Transverse colon (tissue), 4 donors: ENCODE measurements at regions of chr15 and their contacts with region 1.

Region 1: DNA sequence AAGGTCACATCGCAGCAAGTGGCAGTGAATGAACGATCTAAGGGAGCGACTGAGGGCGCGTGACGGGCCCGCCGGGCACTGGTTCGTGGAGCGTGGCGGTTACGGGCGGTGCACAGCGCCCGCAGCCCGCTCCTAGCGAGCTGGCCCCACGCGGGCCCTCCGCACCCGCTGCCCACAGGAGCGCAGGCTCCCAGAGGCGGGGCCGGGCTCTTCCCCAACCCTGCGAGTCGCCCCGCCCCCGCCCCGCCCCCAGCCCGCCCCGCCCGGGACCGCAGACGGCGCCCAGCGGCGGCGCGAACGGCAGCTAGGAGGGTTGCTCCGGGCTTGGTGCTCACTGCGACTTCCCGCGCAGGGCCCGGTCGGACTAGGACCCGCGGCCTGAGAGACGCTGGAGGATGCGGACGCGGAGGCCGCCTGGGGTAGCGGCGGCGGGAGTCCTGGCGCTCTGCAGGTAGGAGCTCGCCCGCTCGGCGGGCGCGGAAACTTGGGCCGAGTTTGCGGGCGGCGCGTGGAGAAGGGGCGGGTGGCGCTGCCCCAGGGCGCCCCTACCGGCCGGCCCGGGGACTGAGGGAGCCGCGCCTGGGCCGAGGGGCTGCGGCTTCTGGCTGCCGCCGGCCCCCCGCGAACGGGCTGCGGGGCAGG is at the start of gene C15orf39:
- DNase-seq: peak; percentile 78
- H3K4me3 ChIP-seq: peak within 1 kb of the TSS; percentile 79 to 89 (median 86)
- H3K27ac ChIP-seq: peak within 1 kb of the TSS; percentile 96 to 97 (median 96)
- H3K4me1 ChIP-seq: peaks cover 30 to 51% (median 37%) of the 10 kb centered on the region in 4 donors
- H3K27me3 ChIP-seq: no peaks in the 10 kb centered on the region
- CTCF ChIP-seq: peak; percentile 60 to 98 (median 94)
- EP300 ChIP-seq: no peak
- POLR2A ChIP-seq: peak; percentile 94
- total RNA-seq, gene C15orf39: 20.9 to 27.9 (median 26.7) TPM

Region 2: GRCh38 chr15:74573987-74574386 is 627.7 kb before region 1 on chr15:
- in situ Hi-C with region 1: no loop called
- intact Hi-C with region 1: no loop called
- DNase-seq: no peak
- H3K4me3 ChIP-seq: no peak overlapping the region
- H3K27ac ChIP-seq: no peak overlapping the region
- H3K4me1 ChIP-seq: peaks cover 0 to 4% (median 0%) of the 10 kb centered on the region in 4 donors
- H3K27me3 ChIP-seq: no peaks in the 10 kb centered on the region
- CTCF ChIP-seq: no peak
- EP300 ChIP-seq: no peak
- POLR2A ChIP-seq: no peak

Region 3: DNA sequence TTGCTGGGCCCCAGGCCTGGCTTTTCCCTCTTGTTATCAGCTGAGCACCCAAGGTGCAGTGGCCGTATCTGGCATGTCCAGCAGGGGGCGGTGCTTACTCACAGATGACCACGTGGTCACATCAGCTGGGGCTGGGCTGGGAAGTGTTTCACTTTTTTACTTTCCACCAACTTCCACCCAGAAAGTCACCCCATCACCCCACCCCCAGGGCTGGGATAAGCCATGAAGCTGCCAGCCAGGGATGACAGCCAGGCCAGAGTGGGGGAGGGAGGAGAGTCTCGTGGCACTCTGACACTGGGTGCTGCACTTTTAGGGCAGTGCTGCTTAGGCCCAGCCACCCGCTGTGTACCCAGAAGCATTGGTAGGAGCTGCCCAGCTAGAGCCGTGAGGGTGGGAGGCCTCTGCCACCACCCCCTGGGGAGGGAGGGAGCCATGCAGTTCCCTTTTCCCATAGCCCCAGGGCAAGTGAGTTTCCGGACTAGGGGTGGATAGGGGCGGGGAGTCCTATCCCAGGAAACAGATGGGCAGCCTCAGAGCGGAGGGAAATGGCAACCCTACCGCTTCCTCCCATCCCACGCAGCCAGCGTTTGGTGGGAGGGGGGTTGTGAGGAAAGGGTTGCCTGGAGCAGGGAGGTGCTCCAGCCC is 172.2 kb before region 1 on chr15:
- in situ Hi-C with region 1: loop called (anchors 5 to 10 kb)
- intact Hi-C with region 1: loop called (anchors 2 kb)
- DNase-seq: peak; percentile 95
- H3K4me3 ChIP-seq: no peak overlapping the region
- H3K27ac ChIP-seq: peak overlapping the region; percentile 36 to 71 (median 63)
- H3K4me1 ChIP-seq: peaks cover 19 to 40% (median 22%) of the 10 kb centered on the region in 4 donors
- H3K27me3 ChIP-seq: no peaks in the 10 kb centered on the region
- CTCF ChIP-seq: peak; percentile 91 to 98 (median 93)
- EP300 ChIP-seq: no peak
- POLR2A ChIP-seq: no peak

Region 4: DNA sequence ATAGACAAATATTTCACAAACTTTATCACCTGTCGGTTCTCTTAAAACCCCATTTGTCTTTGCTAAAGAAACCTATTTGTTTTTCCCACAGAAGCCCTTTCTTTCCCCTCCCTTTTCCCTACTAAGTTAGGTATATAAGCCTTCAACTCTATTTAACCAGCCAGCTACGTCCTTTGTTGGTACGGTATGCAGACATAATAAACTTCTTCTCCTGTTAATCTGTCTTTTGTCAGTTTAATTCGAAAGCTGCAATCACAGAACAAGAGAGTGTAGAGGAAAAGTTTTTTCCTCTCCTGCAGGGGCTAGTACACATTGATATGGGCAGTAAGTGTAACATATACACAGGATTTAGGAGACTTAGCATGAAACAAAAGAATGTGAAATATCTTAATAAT is 22.0 kb before region 1 on chr15:
- in situ Hi-C with region 1: no loop called
- intact Hi-C with region 1: loop called (anchors 1 kb)
- DNase-seq: no peak
- H3K4me3 ChIP-seq: no peak overlapping the region
- H3K27ac ChIP-seq: peak overlapping the region; percentile 56 to 81 (median 72)
- H3K4me1 ChIP-seq: peaks cover 53 to 79% (median 70%) of the 10 kb centered on the region in 4 donors
- H3K27me3 ChIP-seq: peaks cover 6% of the 10 kb centered on the region
- CTCF ChIP-seq: no peak
- EP300 ChIP-seq: no peak
- POLR2A ChIP-seq: no peak